ENCODE measurements at regions of chr12 and their contacts with region 1.

Region 1: GRCh38 chr12:29655861-29656260 is 127.9 kb downstream of the TMTC1 start:
- DNase-seq: no peak
- ATAC-seq: peak; percentile 66
- H3K4me3 ChIP-seq: no peak overlapping the region
- H3K27ac ChIP-seq: no peak overlapping the region
- H3K4me1 ChIP-seq: no peaks in the 10 kb centered on the region
- H3K27me3 ChIP-seq: no peaks in the 10 kb centered on the region
- CTCF ChIP-seq: no peak
- EP300 ChIP-seq: no peak
- POLR2A ChIP-seq: no peak
- RAD21 ChIP-seq: no peak

Region 2: DNA sequence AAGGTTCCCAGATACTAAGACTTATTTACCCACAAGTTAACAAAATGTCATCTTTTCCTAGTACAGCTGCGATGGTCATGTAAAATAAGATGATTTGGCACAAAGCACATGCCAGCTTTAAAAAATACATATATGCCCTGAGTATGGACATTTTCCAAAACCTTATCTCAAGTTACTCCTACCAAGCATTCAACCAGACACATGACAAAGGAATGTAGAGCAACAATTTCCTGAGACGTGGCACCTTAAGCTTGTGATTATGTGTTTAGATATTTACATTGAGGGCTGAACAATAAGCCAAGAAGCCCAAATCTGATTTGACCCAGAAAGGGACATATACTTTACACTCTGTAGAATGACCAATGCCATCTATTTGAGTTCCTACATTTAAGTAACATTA is 133.9 kb before region 1 on chr12:
- CTCF ChIA-PET with region 1: no interaction called
- POLR2A ChIA-PET with region 1: no interaction called
- RAD21 ChIA-PET with region 1: no interaction called
- SMC1A ChIA-PET with region 1: no interaction called
- in situ Hi-C with region 1: no loop called
- intact Hi-C with region 1: no loop called
- DNase-seq: no peak
- ATAC-seq: no peak
- H3K4me3 ChIP-seq: no peak overlapping the region
- H3K27ac ChIP-seq: no peak overlapping the region
- H3K4me1 ChIP-seq: no peaks in the 10 kb centered on the region
- H3K27me3 ChIP-seq: no peaks in the 10 kb centered on the region
- CTCF ChIP-seq: no peak
- EP300 ChIP-seq: no peak
- POLR2A ChIP-seq: no peak
- RAD21 ChIP-seq: no peak

Region 3: DNA sequence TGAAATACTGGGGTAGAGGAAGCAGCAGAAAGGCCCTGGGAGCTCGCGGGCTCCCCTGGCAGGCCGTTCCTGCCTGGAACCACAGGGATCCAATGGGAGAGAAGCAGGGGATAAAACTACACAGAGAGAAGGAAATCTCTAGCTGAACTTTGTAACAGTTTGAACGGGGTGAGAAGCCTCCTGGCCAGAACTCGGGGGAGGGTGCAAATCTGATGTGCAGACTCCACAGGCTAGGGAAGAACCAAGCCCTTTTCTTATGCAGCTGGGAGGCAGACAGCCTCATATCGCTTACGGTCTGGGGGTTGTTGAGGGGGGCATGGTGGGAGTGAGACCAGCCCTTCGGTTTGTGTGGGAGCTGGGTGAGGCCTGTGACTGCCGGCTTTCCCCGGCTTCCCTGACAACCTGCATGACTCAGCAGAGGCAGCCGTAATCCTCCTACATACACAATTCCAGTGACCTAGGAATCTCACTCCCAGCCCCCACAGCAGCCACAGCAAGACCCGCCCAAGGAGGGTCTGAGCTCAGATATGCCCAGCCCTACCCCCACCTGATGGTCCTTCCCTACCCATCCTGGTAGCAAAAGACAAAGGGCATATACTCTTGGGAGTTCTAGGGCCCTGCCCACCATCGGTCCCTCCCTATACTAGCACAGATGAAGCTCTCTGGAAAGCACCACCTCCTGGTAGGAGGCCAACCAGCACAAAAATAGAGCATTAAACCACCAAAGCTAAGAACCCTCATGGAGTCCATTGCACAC is 15.1 kb before region 1 on chr12:
- CTCF ChIA-PET with region 1: no interaction called
- POLR2A ChIA-PET with region 1: interaction called, 3 read pairs
- RAD21 ChIA-PET with region 1: interaction called, 7 read pairs
- SMC1A ChIA-PET with region 1: interaction called, 26 read pairs
- in situ Hi-C with region 1: no loop called
- intact Hi-C with region 1: no loop called
- DNase-seq: no peak
- ATAC-seq: no peak
- H3K4me3 ChIP-seq: no peak overlapping the region
- H3K27ac ChIP-seq: no peak overlapping the region
- H3K4me1 ChIP-seq: no peaks in the 10 kb centered on the region
- H3K27me3 ChIP-seq: no peaks in the 10 kb centered on the region
- CTCF ChIP-seq: no peak
- EP300 ChIP-seq: no peak
- POLR2A ChIP-seq: no peak
- RAD21 ChIP-seq: no peak

Region 4: GRCh38 chr12:29667011-29667410 is 11.2 kb after region 1 on chr12:
- CTCF ChIA-PET with region 1: no interaction called
- POLR2A ChIA-PET with region 1: interaction called, 4 read pairs
- RAD21 ChIA-PET with region 1: interaction called, 4 read pairs
- SMC1A ChIA-PET with region 1: interaction called, 29 read pairs
- in situ Hi-C with region 1: no loop called
- intact Hi-C with region 1: no loop called
- DNase-seq: no peak
- ATAC-seq: no peak
- H3K4me3 ChIP-seq: no peak overlapping the region
- H3K27ac ChIP-seq: no peak overlapping the region
- H3K4me1 ChIP-seq: no peaks in the 10 kb centered on the region
- H3K27me3 ChIP-seq: no peaks in the 10 kb centered on the region
- CTCF ChIP-seq: no peak
- EP300 ChIP-seq: no peak
- POLR2A ChIP-seq: no peak
- RAD21 ChIP-seq: no peak

Region 5: DNA sequence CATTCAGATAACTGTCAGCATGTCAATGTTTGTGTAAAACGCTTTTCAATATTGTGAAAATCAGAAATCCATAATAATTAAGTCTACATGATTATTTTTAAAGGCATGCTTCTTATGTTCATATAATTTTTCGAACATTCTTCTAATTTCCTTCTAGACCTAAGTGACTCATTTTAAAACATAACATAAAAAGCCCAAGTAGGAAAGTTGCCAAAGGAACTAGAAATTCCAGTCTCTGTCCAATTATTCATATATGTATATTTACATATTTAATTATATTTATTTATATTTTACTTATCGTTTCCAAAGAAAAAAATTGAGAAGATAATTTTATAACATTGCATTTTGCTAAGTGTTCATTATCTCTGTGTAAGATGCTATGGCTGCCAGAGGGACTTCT is 17.5 kb after region 1 on chr12:
- CTCF ChIA-PET with region 1: no interaction called
- POLR2A ChIA-PET with region 1: interaction called, 4 read pairs
- RAD21 ChIA-PET with region 1: interaction called, 3 read pairs
- SMC1A ChIA-PET with region 1: interaction called, 29 read pairs
- in situ Hi-C with region 1: no loop called
- intact Hi-C with region 1: no loop called
- DNase-seq: no peak
- ATAC-seq: no peak
- H3K4me3 ChIP-seq: no peak overlapping the region
- H3K27ac ChIP-seq: no peak overlapping the region
- H3K4me1 ChIP-seq: no peaks in the 10 kb centered on the region
- H3K27me3 ChIP-seq: no peaks in the 10 kb centered on the region
- CTCF ChIP-seq: no peak
- EP300 ChIP-seq: no peak
- POLR2A ChIP-seq: no peak
- RAD21 ChIP-seq: no peak

Region 6: DNA sequence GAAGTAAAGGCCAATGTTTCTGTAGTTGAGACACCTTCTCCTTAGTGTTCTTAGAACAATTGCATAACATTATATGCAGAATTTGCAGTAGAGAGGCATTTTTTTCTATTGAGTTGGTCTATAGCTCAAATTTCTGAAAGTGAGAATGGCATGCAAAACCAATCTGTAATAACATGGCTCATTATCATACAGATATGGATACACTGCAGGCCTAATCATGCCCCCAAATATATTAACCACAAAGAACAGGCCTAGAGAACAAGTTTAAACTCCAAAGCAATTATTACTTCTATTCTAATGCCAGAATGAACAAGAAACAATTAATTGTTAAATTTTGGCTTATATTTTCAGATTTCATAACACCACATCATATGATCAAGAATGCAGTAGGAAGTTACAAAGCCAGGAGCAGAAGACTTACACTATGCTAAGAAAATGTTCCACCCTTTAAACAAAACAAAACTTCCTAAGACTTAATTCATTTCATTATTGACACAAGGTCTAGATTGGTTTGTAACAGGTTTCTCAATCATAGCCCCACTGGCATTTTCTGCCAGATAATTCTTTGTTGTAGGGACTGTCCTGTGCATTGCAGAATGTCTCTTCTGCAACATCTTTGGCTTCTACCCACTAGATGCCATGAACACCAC is 101.0 kb after region 1 on chr12:
- CTCF ChIA-PET with region 1: no interaction called
- POLR2A ChIA-PET with region 1: no interaction called
- RAD21 ChIA-PET with region 1: no interaction called
- SMC1A ChIA-PET with region 1: no interaction called
- in situ Hi-C with region 1: no loop called
- intact Hi-C with region 1: no loop called
- DNase-seq: no peak
- ATAC-seq: no peak
- H3K4me3 ChIP-seq: no peak overlapping the region
- H3K27ac ChIP-seq: no peak overlapping the region
- H3K4me1 ChIP-seq: no peaks in the 10 kb centered on the region
- H3K27me3 ChIP-seq: no peaks in the 10 kb centered on the region
- CTCF ChIP-seq: no peak
- EP300 ChIP-seq: no peak
- POLR2A ChIP-seq: no peak
- RAD21 ChIP-seq: no peak

Region 7: DNA sequence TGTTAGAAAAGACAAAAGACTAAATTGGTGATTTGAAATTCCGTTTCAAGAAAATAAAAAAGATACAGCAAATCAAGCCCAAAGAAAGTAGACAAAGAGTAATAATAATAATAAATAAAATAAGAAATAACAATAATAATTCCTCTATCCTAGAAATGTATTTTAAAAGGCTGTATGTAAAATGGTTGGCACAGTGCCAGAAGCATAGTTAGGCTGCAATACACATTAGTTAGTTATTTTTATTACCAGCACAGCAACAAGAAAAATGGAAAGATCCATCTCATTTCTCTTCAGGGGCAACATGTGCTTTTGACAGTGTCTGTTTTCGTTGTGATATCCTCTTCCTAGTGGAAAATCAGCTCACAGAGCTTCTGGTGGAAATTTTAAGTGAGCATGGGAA is 302.0 kb after region 1 on chr12:
- CTCF ChIA-PET with region 1: no interaction called
- POLR2A ChIA-PET with region 1: no interaction called
- RAD21 ChIA-PET with region 1: no interaction called
- SMC1A ChIA-PET with region 1: no interaction called
- in situ Hi-C with region 1: no loop called
- intact Hi-C with region 1: no loop called
- DNase-seq: no peak
- ATAC-seq: no peak
- H3K4me3 ChIP-seq: no peak overlapping the region
- H3K27ac ChIP-seq: no peak overlapping the region
- H3K4me1 ChIP-seq: no peaks in the 10 kb centered on the region
- H3K27me3 ChIP-seq: no peaks in the 10 kb centered on the region
- CTCF ChIP-seq: no peak
- EP300 ChIP-seq: no peak
- POLR2A ChIP-seq: no peak
- RAD21 ChIP-seq: no peak

Measured in GM12878 (cell line).